ENCODE measurements at regions of chr5 and their contacts with region 1.

Region 1: GRCh38 chr5:9667906-9668305 is 37.8 kb upstream of the TAS2R1 start:
- DNase-seq: no peak
- ATAC-seq: no peak
- H3K4me3 ChIP-seq: no peak overlapping the region
- H3K27ac ChIP-seq: no peak overlapping the region
- H3K4me1 ChIP-seq: no peaks in the 10 kb centered on the region
- H3K27me3 ChIP-seq: no peaks in the 10 kb centered on the region
- CTCF ChIP-seq: no peak

Region 2: DNA sequence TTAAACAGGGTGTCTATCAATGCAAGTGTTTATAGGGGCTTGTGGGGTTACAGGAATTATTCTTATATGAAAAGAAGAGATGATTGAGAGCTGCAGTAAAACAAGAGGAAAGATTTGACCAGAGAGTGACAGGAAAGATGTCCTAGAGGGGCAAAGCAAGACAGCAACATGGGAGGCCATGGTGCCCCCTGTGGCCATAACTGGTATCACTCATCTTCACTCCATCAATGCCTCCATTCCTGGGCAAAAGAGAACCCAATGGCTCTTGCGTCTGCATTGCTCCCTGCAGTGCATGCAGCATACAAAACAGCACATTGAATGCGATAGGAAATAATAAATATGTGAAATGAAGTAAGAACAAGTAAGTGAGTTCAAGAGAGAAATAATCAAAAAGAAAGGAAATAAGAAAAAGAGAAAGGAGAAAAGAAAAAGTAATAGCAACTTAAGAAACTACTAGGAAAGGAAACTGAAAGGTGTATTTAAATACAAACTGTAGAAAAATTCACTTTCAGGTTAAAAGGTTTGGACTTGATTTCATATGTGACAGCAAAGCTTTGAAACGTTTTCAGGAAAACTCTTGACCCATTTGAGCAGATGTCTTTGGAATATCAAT is 328.6 kb before region 1 on chr5:
- intact Hi-C with region 1: loop called in 1 of 10 experiments (anchors 5 kb)
- DNase-seq: no peak
- ATAC-seq: no peak
- H3K4me3 ChIP-seq: no peak overlapping the region
- H3K27ac ChIP-seq: no peak overlapping the region
- H3K4me1 ChIP-seq: peaks cover 2 to 26% (median 11%) of the 10 kb centered on the region in 9 donors
- H3K27me3 ChIP-seq: no peaks in the 10 kb centered on the region
- CTCF ChIP-seq: peak in 6 of 9 donors; percentile 15 to 33 (median 24)

Region 3: DNA sequence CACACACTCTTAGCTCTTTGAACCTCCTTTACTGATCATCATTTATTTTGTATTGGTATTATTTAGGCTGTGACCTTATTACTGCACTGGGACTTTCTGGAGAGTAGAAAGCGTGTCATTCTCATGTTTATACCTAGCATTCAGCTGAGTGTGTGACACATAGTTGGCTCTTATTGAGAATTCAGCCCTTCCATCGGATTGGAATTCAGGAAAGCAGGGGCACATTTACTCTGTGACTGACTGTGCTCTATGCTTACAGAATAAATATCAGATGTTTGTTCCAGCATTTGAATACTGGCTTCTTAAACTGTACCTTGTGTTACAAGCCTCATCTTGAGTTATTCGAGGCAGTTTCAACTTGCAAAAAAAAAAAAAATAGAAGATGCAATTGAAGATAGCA is 1454.0 kb after region 1 on chr5:
- intact Hi-C with region 1: no loop called
- DNase-seq: no peak
- ATAC-seq: no peak
- H3K4me3 ChIP-seq: no peak overlapping the region
- H3K27ac ChIP-seq: no peak overlapping the region
- H3K4me1 ChIP-seq: no peaks in the 10 kb centered on the region
- H3K27me3 ChIP-seq: no peaks in the 10 kb centered on the region
- CTCF ChIP-seq: no peak